ENCODE measurements at regions of chr9 and their contacts with region 1.

Region 1: DNA sequence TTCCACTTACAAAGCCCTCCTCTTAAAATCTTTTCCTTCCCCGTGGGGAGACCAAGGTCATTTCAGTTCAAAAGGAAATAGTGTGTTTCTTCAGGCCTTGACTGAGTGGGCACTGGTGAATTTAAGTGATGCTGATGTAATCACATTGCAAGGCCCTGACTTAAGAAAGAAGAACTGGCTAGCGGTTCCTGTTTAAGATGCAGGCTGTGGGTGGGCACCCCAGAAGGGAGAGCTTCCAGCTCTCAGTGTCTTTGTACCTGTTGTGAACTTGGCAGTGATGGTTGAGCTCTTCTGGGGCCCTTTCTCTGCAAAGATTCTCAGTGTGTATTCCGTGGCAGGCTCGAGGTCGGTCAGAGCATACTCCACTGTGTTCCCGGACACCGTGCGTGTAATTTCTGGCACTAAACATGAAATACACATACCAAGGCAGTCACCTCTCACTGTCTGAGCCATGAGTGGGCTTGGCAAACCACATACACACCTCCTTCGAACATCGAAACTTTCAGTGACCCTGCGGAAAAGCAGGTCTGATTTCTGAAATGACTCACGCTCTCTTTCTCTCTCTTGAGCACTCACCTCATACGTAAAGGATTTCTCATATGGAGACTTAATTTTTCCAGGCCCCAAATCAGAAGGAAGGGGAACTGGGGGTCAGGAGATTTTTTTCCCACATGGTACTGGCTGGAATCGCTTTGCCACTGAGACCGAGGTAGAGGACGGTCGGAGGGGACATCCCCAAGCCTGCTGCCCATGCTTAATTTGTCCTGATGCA is 81.9 kb downstream of the TNC start:
- DNase-seq: peak; percentile 77
- ATAC-seq: peak; percentile 90
- H3K4me3 ChIP-seq: no peak overlapping the region
- H3K27ac ChIP-seq: no peak overlapping the region
- H3K4me1 ChIP-seq: peaks cover 17% of the 10 kb centered on the region
- H3K27me3 ChIP-seq: no peaks in the 10 kb centered on the region; a peak in 2 of 4 replicates
- CTCF ChIP-seq: no peak
- EP300 ChIP-seq: peak; percentile 56 to 90; a peak in 2 of 4 replicates
- POLR2A ChIP-seq: no peak
- RAD21 ChIP-seq: no peak

Region 2: GRCh38 chr9:115057559-115057958 is 21.5 kb after region 1 on chr9:
- CTCF ChIA-PET with region 1: no interaction called
- POLR2A ChIA-PET with region 1: no interaction called
- RAD21 ChIA-PET with region 1: no interaction called
- SMC1A ChIA-PET with region 1: no interaction called
- in situ Hi-C with region 1: no loop called
- intact Hi-C with region 1: no loop called
- DNase-seq: no peak
- ATAC-seq: no peak
- H3K4me3 ChIP-seq: no peak overlapping the region
- H3K27ac ChIP-seq: no peak overlapping the region
- H3K4me1 ChIP-seq: no peaks in the 10 kb centered on the region
- H3K27me3 ChIP-seq: peaks cover 4% of the 10 kb centered on the region in 2 experiments; a peak in 3 of 4 replicates
- CTCF ChIP-seq: no peak
- EP300 ChIP-seq: no peak
- POLR2A ChIP-seq: no peak
- RAD21 ChIP-seq: no peak

Region 3: DNA sequence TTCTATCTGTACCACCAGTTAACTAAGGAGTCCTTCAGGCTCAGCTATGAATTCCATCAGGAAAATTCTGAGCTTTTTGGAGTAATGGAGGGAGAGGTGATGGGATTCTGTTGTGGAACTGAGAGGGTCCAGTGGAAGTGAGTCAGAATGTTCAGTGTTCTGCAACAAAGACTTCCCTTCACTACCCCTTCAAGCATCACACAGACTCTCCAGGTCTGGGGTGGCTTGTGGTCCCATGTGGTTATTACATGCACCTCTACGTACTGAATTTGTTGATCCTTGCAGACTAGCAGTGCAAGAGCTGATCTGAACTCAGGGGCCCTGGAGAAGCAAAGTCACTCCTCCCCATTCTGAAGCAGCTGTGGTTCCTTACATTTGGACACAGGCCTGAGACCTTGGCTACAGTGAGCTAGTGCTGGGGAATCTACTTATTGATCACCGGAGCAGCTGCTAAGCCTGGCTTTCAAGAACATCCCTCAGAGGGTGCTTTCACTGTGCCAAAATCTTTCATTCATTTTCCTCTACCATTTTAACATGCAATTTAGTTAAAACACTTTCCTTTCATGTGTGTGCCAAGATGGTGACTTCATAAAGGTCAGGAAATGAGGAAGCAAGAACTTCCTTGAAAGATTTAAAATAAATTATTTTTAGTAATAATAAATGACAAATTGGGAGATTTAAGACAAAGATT is 157.0 kb after region 1 on chr9:
- CTCF ChIA-PET with region 1: no interaction called
- POLR2A ChIA-PET with region 1: no interaction called
- RAD21 ChIA-PET with region 1: no interaction called
- SMC1A ChIA-PET with region 1: no interaction called
- in situ Hi-C with region 1: no loop called
- intact Hi-C with region 1: loop called (anchors 5 kb)
- DNase-seq: no peak
- ATAC-seq: peak; percentile 79
- H3K4me3 ChIP-seq: no peak overlapping the region
- H3K27ac ChIP-seq: peak overlapping the region; percentile 10; the same call in 1 of the 2 replicates
- H3K4me1 ChIP-seq: peaks cover 4% of the 10 kb centered on the region; the same call in 1 of the 2 replicates
- H3K27me3 ChIP-seq: no peaks in the 10 kb centered on the region
- CTCF ChIP-seq: no peak
- EP300 ChIP-seq: no peak
- POLR2A ChIP-seq: no peak
- RAD21 ChIP-seq: no peak

Region 4: GRCh38 chr9:115306865-115307264 is 270.8 kb after region 1 on chr9:
- CTCF ChIA-PET with region 1: no interaction called
- POLR2A ChIA-PET with region 1: no interaction called
- RAD21 ChIA-PET with region 1: no interaction called
- SMC1A ChIA-PET with region 1: no interaction called
- in situ Hi-C with region 1: no loop called
- intact Hi-C with region 1: no loop called
- DNase-seq: no peak
- ATAC-seq: no peak
- H3K4me3 ChIP-seq: no peak overlapping the region
- H3K27ac ChIP-seq: no peak overlapping the region
- H3K4me1 ChIP-seq: no peaks in the 10 kb centered on the region
- H3K27me3 ChIP-seq: no peaks in the 10 kb centered on the region
- CTCF ChIP-seq: no peak
- EP300 ChIP-seq: no peak
- POLR2A ChIP-seq: no peak
- RAD21 ChIP-seq: no peak